IMR-90 (cell line): ENCODE measurements at regions of chr2 and their contacts with region 1.

Region 1: GRCh38 chr2:210577263-210578071 is 21.1 kb downstream of the CPS1 start:
- DNase-seq: peak; percentile 59
- ATAC-seq: peak; percentile 77
- H3K4me3 ChIP-seq: no peak overlapping the region
- H3K27ac ChIP-seq: no peak overlapping the region
- H3K4me1 ChIP-seq: no peaks in the 10 kb centered on the region
- H3K27me3 ChIP-seq: no peaks in the 10 kb centered on the region
- CTCF ChIP-seq: peak; percentile 72
- POLR2A ChIP-seq: no peak
- RAD21 ChIP-seq: peak; percentile 53

Region 2: GRCh38 chr2:209495855-209496585 is 1081.4 kb before region 1 on chr2:
- CTCF ChIA-PET with region 1: no interaction called
- POLR2A ChIA-PET with region 1: no interaction called
- dilution Hi-C with region 1: no loop called
- in situ Hi-C with region 1: no loop called
- intact Hi-C with region 1: no loop called
- DNase-seq: peak; percentile 98
- ATAC-seq: peak; percentile 97
- H3K4me3 ChIP-seq: no peak overlapping the region
- H3K27ac ChIP-seq: no peak overlapping the region
- H3K4me1 ChIP-seq: peaks cover 2% of the 10 kb centered on the region; the same call in 1 of the 2 replicates
- H3K27me3 ChIP-seq: no peaks in the 10 kb centered on the region
- CTCF ChIP-seq: no peak
- POLR2A ChIP-seq: no peak
- RAD21 ChIP-seq: no peak

Region 3: DNA sequence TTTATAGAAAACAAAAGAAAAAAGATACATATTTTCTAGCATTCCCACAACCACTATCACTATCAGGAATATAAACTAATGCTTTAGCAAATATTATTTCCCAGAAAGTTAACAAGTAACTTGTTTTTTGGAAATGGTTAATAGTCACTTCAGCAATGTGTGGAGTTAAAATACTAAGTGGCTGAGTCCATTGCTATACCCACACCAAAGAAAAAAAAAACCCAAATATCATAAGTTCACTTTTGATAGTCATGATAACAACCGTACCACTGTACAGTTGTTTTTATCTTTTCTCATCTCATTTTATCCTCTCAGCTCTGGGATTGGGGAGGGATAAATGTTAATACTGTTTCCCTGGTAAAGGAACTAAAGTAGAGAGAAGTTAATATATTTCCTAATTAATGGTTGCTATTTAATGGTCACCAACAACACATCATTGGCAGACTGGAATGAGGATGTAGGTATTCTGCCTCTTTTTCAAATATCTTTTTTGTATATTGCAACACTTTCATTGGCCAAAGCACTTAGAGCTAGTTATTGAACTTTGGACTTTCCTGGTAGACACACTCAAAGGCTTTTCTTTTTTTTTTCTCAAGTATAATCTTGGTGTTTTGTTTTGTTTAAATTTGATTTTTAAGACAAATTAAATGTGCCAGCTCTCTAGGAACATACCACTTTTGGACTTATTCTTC is 387.9 kb before region 1 on chr2:
- CTCF ChIA-PET with region 1: no interaction called
- POLR2A ChIA-PET with region 1: no interaction called
- dilution Hi-C with region 1: no loop called
- in situ Hi-C with region 1: no loop called
- intact Hi-C with region 1: no loop called
- DNase-seq: no peak
- ATAC-seq: no peak
- H3K4me3 ChIP-seq: no peak overlapping the region
- H3K27ac ChIP-seq: no peak overlapping the region
- H3K4me1 ChIP-seq: no peaks in the 10 kb centered on the region
- H3K27me3 ChIP-seq: peaks cover 1% of the 10 kb centered on the region; the same call in 1 of the 2 replicates
- CTCF ChIP-seq: no peak
- POLR2A ChIP-seq: no peak
- RAD21 ChIP-seq: no peak

Region 4: DNA sequence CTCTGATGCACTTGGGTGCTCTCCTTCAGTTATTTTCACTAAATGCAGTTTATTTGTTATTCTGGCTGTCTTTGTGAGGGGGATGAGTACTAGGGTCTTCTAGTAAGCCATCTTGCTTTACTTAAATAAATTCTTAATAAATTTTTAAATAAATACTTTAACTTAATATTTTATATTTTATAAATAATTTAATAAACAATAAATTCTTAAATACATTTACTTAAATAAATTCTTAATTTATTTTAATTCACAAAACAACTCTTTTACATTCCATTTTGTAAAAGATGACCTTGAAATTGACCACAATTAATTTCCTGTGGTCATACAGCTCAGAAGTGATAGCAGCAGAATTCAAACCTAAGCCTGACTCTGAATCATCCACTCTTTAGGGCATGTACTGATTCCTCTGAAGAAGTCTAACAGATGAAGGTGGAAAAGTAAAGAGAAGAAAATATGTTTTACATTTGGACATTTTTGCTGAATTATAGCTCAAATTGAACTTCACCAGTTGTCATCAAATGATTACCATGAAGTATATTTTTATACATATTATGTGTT is 291.3 kb before region 1 on chr2:
- CTCF ChIA-PET with region 1: no interaction called
- POLR2A ChIA-PET with region 1: interaction called, 11 read pairs
- dilution Hi-C with region 1: no loop called
- in situ Hi-C with region 1: no loop called
- intact Hi-C with region 1: no loop called
- DNase-seq: no peak
- ATAC-seq: no peak
- H3K4me3 ChIP-seq: no peak overlapping the region
- H3K27ac ChIP-seq: no peak overlapping the region
- H3K4me1 ChIP-seq: no peaks in the 10 kb centered on the region
- H3K27me3 ChIP-seq: no peaks in the 10 kb centered on the region
- CTCF ChIP-seq: no peak
- POLR2A ChIP-seq: no peak
- RAD21 ChIP-seq: no peak